Panc1 (cell line): ENCODE measurements at regions of chr1 and their contacts with region 1.

Region 1: DNA sequence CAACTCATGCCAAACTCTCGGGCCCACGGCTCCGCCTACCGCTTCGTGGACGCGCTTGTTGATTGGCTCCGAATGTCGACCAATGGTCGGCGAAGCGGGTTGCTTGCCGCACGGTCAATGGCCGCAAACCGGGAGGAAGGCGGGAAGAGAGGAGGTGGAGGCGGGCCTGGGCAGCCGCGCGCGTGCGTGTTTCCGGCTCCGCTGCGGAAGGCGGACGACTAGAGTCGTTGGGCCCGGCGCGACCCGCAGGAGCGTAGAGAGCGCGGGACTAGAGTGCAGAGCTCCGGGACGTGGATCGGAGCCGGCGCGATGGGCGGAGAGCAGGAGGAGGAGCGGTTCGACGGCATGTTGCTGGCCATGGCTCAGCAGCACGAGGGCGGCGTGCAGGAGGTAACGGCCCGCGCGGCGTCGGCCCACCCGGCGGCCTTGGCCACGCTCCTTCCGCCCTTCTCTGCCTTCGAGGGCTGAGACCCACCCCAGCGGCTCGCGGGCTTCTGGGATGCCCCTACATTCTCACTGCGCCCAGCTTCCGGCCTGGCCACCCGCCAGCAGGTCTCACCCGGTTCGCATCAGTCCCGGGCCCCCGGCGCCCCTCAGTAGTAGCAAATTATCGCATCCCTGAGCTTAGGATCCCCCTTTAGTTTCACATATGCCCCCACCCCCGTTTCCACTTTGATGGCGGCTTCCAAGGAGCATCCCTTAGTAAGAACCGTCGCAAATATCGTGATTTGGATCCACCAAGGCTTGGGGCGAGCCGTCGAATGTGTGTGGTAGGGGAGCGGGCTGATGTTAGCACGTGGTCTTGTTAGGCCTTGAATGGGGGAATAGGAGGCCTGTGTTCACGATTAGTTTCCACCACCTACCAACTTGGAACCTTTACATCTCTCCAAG is at the start of gene NUDC:
- DNase-seq: peak; percentile 87
- ATAC-seq: peak; percentile 98
- H3K4me3 ChIP-seq: peak within 1 kb of the TSS; percentile 82 to 87
- H3K27ac ChIP-seq: peak within 1 kb of the TSS; percentile 98
- H3K4me1 ChIP-seq: peaks cover 23% of the 10 kb centered on the region
- H3K27me3 ChIP-seq: no peaks in the 10 kb centered on the region
- CTCF ChIP-seq: no peak
- total RNA-seq, gene NUDC: 161 TPM

Region 2: DNA sequence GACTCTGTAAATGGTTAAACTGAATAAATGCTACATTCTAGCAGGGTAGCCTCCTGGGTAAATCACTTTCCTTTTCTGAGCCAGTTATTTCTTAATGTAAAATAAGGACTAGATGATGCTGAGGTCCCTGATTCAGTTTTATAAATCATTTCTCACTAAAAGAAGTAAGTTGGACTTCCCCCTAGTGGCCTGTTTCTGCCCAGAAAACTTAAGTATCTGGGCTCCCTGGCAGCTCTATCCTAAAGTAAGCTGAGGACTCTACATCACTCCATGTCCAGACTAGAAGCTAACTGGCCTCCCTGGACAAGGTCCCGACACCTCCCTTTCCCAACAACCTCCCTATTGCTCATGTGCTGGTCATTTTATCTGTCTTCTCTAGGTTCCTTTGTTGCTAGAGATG is 34.7 kb before region 1 on chr1:
- CTCF ChIA-PET with region 1: no interaction called
- POLR2A ChIA-PET with region 1: no interaction called
- in situ Hi-C with region 1: no loop called
- intact Hi-C with region 1: no loop called
- DNase-seq: no peak
- ATAC-seq: peak; percentile 37; the same call in 1 of the 2 replicates
- H3K4me3 ChIP-seq: no peak overlapping the region
- H3K27ac ChIP-seq: no peak overlapping the region
- H3K4me1 ChIP-seq: peaks cover 17% of the 10 kb centered on the region
- H3K27me3 ChIP-seq: no peaks in the 10 kb centered on the region
- CTCF ChIP-seq: peak; percentile 75; the same call in 1 of the 2 replicates

Region 3: GRCh38 chr1:26910343-26911160 is 11.2 kb before region 1 on chr1:
- CTCF ChIA-PET with region 1: no interaction called
- POLR2A ChIA-PET with region 1: no interaction called
- in situ Hi-C with region 1: no loop called
- intact Hi-C with region 1: no loop called
- DNase-seq: no peak
- ATAC-seq: no peak
- H3K4me3 ChIP-seq: no peak overlapping the region
- H3K27ac ChIP-seq: peak overlapping the region; percentile 83
- H3K4me1 ChIP-seq: peaks cover 54% of the 10 kb centered on the region
- H3K27me3 ChIP-seq: no peaks in the 10 kb centered on the region
- CTCF ChIP-seq: no peak

Region 4: GRCh38 chr1:27478098-27478497 is 556.3 kb after region 1 on chr1:
- CTCF ChIA-PET with region 1: no interaction called
- POLR2A ChIA-PET with region 1: interaction called, 10 read pairs
- in situ Hi-C with region 1: no loop called
- intact Hi-C with region 1: no loop called
- DNase-seq: no peak
- ATAC-seq: no peak
- H3K4me3 ChIP-seq: no peak overlapping the region
- H3K27ac ChIP-seq: no peak overlapping the region
- H3K4me1 ChIP-seq: peaks cover 4% of the 10 kb centered on the region; the same call in 1 of the 2 replicates
- H3K27me3 ChIP-seq: no peaks in the 10 kb centered on the region
- CTCF ChIP-seq: no peak